Naive thymus-derived CD4-positive, alpha-beta T cell (primary cell): ENCODE measurements at regions of chr7 and their contacts with region 1.

Region 1: GRCh38 chr7:75878769-75879611 is at the start of gene RHBDD2:
- DNase-seq: peak; percentile 86 to 96 (median 91)
- ATAC-seq: peak; percentile 96
- H3K4me3 ChIP-seq: peak within 1 kb of the TSS; percentile 94
- H3K4me3 Mint-ChIP-seq: peak within 1 kb of the TSS; percentile 93 to 99 (median 98)
- H3K27ac ChIP-seq: peak within 1 kb of the TSS; percentile 95
- H3K27ac Mint-ChIP-seq: peak within 1 kb of the TSS; percentile 91 to 99 (median 97)
- H3K4me1 ChIP-seq: peaks cover 16 to 20% of the 10 kb centered on the region in 2 donors
- H3K4me1 Mint-ChIP-seq: peaks cover 26 to 43% (median 34%) of the 10 kb centered on the region in 7 donors
- H3K27me3 ChIP-seq: no peaks in the 10 kb centered on the region
- H3K27me3 Mint-ChIP-seq: no peaks in the 10 kb centered on the region
- total RNA-seq, gene RHBDD2: 36.2 to 95.1 (median 47.8) TPM

Region 2: GRCh38 chr7:75072978-75073282 is 806.1 kb before region 1 on chr7:
- CTCF ChIA-PET with region 1: no interaction called
- POLR2A ChIA-PET with region 1: no interaction called
- intact Hi-C with region 1: loop called in 1 of 2 experiments (anchors 5 kb)
- DNase-seq: peak in 2 of 9 donors; percentile 5 to 12
- ATAC-seq: no peak
- H3K4me3 ChIP-seq: peak overlapping the region; percentile 69
- H3K4me3 Mint-ChIP-seq: peak overlapping the region; percentile 89 to 95 (median 92)
- H3K27ac ChIP-seq: peak overlapping the region; percentile 86
- H3K27ac Mint-ChIP-seq: peak overlapping the region; percentile 92 to 98 (median 94)
- H3K4me1 ChIP-seq: peaks cover 4 to 7% of the 10 kb centered on the region in 2 donors
- H3K4me1 Mint-ChIP-seq: peaks cover 0 to 15% (median 9%) of the 10 kb centered on the region in 7 donors
- H3K27me3 ChIP-seq: no peaks in the 10 kb centered on the region
- H3K27me3 Mint-ChIP-seq: no peaks in the 10 kb centered on the region

Region 3: DNA sequence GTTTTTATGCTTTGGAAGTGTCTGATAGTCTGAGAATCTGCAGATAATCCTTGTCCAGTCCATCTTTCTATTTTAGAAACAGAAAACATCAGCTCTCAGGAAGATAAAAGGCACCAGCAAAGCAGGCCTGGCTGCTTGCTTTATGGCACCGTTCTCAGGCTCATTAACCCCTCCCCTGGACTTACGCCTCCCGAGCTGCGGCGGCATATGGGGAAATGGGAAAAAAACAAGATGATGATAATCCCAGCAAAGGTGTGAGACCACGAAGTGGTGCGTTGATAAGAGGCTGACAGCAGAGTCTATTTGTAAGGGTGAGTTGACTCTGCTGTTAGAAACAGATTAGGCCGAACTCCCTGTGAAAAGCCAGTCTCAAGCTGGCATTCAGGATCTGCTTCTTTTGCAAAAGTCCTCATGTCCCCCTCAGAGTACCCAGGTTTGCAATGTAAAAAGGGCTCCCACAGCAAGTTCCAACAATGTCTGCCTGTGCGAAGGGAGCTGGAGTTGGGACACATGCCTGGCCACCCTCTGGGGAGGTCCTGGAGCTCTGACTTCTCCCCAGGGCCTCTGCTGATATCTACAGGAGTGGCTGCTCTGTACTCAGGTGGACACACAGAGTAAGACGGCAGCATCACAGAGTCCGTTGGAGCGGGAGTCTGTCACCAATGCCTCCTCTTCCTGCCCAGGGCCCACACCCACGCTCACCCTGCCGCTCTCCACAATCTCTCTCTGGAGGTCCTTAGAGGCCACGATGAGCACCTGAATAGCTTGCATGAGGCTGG is 332.6 kb before region 1 on chr7:
- CTCF ChIA-PET with region 1: no interaction called
- POLR2A ChIA-PET with region 1: no interaction called
- intact Hi-C with region 1: no loop called
- DNase-seq: no peak
- ATAC-seq: no peak
- H3K4me3 ChIP-seq: no peak overlapping the region
- H3K4me3 Mint-ChIP-seq: no peak overlapping the region
- H3K27ac ChIP-seq: no peak overlapping the region
- H3K27ac Mint-ChIP-seq: no peak overlapping the region
- H3K4me1 ChIP-seq: no peaks in the 10 kb centered on the region
- H3K4me1 Mint-ChIP-seq: peaks cover 0 to 2% (median 0%) of the 10 kb centered on the region in 7 donors
- H3K27me3 ChIP-seq: no peaks in the 10 kb centered on the region
- H3K27me3 Mint-ChIP-seq: no peaks in the 10 kb centered on the region

Region 4: GRCh38 chr7:75738987-75739795 is 139.8 kb before region 1 on chr7:
- CTCF ChIA-PET with region 1: no interaction called
- POLR2A ChIA-PET with region 1: interaction called, 5 read pairs
- intact Hi-C with region 1: loop called (anchors 1 kb)
- DNase-seq: peak; percentile 98 to 99 (median 99)
- ATAC-seq: peak; percentile 97
- H3K4me3 ChIP-seq: peak overlapping the region; percentile 93
- H3K4me3 Mint-ChIP-seq: peak overlapping the region; percentile 82 to 100 (median 97)
- H3K27ac ChIP-seq: peak overlapping the region; percentile 80
- H3K27ac Mint-ChIP-seq: peak overlapping the region; percentile 28 to 99 (median 94)
- H3K4me1 ChIP-seq: peaks cover 4 to 15% of the 10 kb centered on the region in 2 donors
- H3K4me1 Mint-ChIP-seq: peaks cover 0 to 19% (median 14%) of the 10 kb centered on the region in 7 donors
- H3K27me3 ChIP-seq: no peaks in the 10 kb centered on the region
- H3K27me3 Mint-ChIP-seq: peaks cover 0 to 41% (median 4%) of the 10 kb centered on the region in 5 donors

Region 5: GRCh38 chr7:75994388-75995051 is 115.5 kb after region 1 on chr7 and contains the start of gene TMEM120A:
- CTCF ChIA-PET with region 1: no interaction called
- POLR2A ChIA-PET with region 1: interaction called, 4 read pairs
- intact Hi-C with region 1: loop called (anchors 1 kb)
- DNase-seq: peak; percentile 87 to 98 (median 92)
- ATAC-seq: peak; percentile 99
- H3K4me3 ChIP-seq: peak within 1 kb of the TSS; percentile 84
- H3K4me3 Mint-ChIP-seq: peak within 1 kb of the TSS; percentile 62 to 82 (median 76)
- H3K27ac ChIP-seq: peak within 1 kb of the TSS; percentile 80
- H3K27ac Mint-ChIP-seq: peak within 1 kb of the TSS in 5 of 9 donors; percentile 48 to 65 (median 55)
- H3K4me1 ChIP-seq: peaks cover 6 to 10% of the 10 kb centered on the region in 2 donors
- H3K4me1 Mint-ChIP-seq: peaks cover 12 to 37% (median 34%) of the 10 kb centered on the region in 7 donors
- H3K27me3 ChIP-seq: no peaks in the 10 kb centered on the region
- H3K27me3 Mint-ChIP-seq: no peaks in the 10 kb centered on the region
- total RNA-seq, gene TMEM120A: 19.1 to 38.6 (median 35.6) TPM

Region 6: DNA sequence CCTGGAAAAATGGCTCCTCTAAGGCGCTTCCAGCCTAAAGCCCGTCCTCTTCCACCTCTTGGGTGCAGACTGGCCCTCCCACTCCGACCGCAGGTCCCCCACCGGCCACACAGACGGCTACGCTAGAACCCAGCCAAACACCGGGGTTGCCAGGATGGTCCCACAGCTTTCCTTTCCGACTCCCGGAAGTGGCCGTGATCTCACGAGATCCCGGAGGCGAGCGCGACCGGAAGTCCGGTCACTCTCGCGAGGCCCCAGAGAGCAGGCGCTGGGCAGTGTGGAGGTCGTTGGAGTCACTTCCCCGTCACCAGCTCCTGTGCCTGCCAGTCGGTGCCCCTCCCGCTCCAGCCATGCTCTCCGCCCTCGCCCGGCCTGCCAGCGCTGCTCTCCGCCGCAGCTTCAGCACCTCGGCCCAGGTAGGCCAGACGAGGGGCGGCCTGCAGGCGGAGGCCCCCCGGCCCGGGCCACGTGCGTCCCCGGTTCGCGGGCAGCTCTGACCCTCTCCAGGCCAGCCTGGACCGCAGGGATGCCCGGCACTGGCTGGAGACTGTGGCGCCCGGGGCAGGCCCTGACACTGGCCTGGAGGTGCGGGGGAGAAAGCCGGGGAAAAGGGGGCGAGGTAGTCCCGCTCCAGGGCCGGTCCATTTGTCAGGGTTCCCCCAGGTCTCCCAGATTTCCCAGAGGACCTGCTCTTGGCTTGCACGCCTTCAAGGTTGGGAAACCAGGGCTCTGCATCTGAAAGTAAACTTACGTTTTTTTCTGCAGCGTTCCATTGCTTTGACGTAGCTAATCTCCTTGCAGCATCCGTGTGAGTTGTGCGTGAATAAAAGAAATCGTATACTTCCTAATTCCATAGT is 169.0 kb after region 1 on chr7 and contains the starts of genes MDH2 and STYXL1:
- CTCF ChIA-PET with region 1: no interaction called
- POLR2A ChIA-PET with region 1: interaction called, 5 read pairs
- intact Hi-C with region 1: loop called in 1 of 2 experiments (anchors 1 kb)
- DNase-seq: peak; percentile 68 to 89 (median 76)
- ATAC-seq: peak; percentile 92
- H3K4me3 ChIP-seq: peak within 1 kb of the TSS; percentile 95
- H3K4me3 Mint-ChIP-seq: peak within 1 kb of the TSS; percentile 90 to 99 (median 97)
- H3K27ac ChIP-seq: peak within 1 kb of the TSS; percentile 80
- H3K27ac Mint-ChIP-seq: peak within 1 kb of the TSS; percentile 92 to 98 (median 97)
- H3K4me1 ChIP-seq: peaks cover 7 to 17% of the 10 kb centered on the region in 2 donors
- H3K4me1 Mint-ChIP-seq: peaks cover 36 to 70% (median 53%) of the 10 kb centered on the region in 7 donors
- H3K27me3 ChIP-seq: no peaks in the 10 kb centered on the region
- H3K27me3 Mint-ChIP-seq: no peaks in the 10 kb centered on the region
- total RNA-seq, gene MDH2: 71.7 to 172 (median 74.6) TPM
- total RNA-seq, gene STYXL1: 11.3 to 31.7 (median 20.0) TPM

Region 7: GRCh38 chr7:76262683-76263402 is 383.9 kb after region 1 on chr7:
- CTCF ChIA-PET with region 1: no interaction called
- POLR2A ChIA-PET with region 1: no interaction called
- intact Hi-C with region 1: loop called in 1 of 2 experiments (anchors 10 kb)
- DNase-seq: peak in 1 of 9 donors; percentile 18
- ATAC-seq: peak; percentile 60
- H3K4me3 ChIP-seq: no peak overlapping the region
- H3K4me3 Mint-ChIP-seq: no peak overlapping the region
- H3K27ac ChIP-seq: no peak overlapping the region
- H3K27ac Mint-ChIP-seq: peak overlapping the region in 1 of 9 donors; percentile 54
- H3K4me1 ChIP-seq: no peaks in the 10 kb centered on the region
- H3K4me1 Mint-ChIP-seq: peaks cover 0 to 18% (median 0%) of the 10 kb centered on the region in 7 donors
- H3K27me3 ChIP-seq: peaks cover 0 to 3% of the 10 kb centered on the region in 2 donors
- H3K27me3 Mint-ChIP-seq: peaks cover 20 to 46% (median 32%) of the 10 kb centered on the region in 5 donors

Region 8: GRCh38 chr7:76359111-76359978 is 480.4 kb after region 1 on chr7:
- CTCF ChIA-PET with region 1: no interaction called
- POLR2A ChIA-PET with region 1: no interaction called
- intact Hi-C with region 1: loop called (anchors 2 to 5 kb)
- DNase-seq: peak; percentile 87 to 96 (median 95)
- ATAC-seq: peak; percentile 94
- H3K4me3 ChIP-seq: peak overlapping the region; percentile 72
- H3K4me3 Mint-ChIP-seq: peak overlapping the region; percentile 84 to 99 (median 95)
- H3K27ac ChIP-seq: peak overlapping the region; percentile 92
- H3K27ac Mint-ChIP-seq: peak overlapping the region; percentile 66 to 99 (median 93)
- H3K4me1 ChIP-seq: peaks cover 4 to 31% of the 10 kb centered on the region in 2 donors
- H3K4me1 Mint-ChIP-seq: peaks cover 28 to 46% (median 43%) of the 10 kb centered on the region in 7 donors
- H3K27me3 ChIP-seq: no peaks in the 10 kb centered on the region
- H3K27me3 Mint-ChIP-seq: no peaks in the 10 kb centered on the region